ENCODE measurements at regions of chr12 and their contacts with region 1.

Region 1: GRCh38 chr12:1795785-1796514 is 24.4 kb upstream of the LRTM2 start:
- DNase-seq: peak; percentile 89
- H3K4me3 ChIP-seq: peak overlapping the region; percentile 32 to 62 (median 35)
- H3K27ac ChIP-seq: no peak overlapping the region
- H3K4me1 ChIP-seq: peaks cover 12% of the 10 kb centered on the region
- H3K27me3 ChIP-seq: no peaks in the 10 kb centered on the region
- CTCF ChIP-seq: peak; percentile 88 to 99
- POLR2A ChIP-seq: peak; percentile 67

Region 2: GRCh38 chr12:1650260-1650977 is 145.5 kb before region 1 on chr12:
- CTCF ChIA-PET with region 1: interaction called, 840 read pairs
- POLR2A ChIA-PET with region 1: interaction called, 7 read pairs
- dilution Hi-C with region 1: no loop called
- intact Hi-C with region 1: loop called (anchors 1 kb)
- DNase-seq: no peak
- H3K4me3 ChIP-seq: no peak overlapping the region
- H3K27ac ChIP-seq: no peak overlapping the region
- H3K4me1 ChIP-seq: no peaks in the 10 kb centered on the region
- H3K27me3 ChIP-seq: peaks cover 24 to 27% of the 10 kb centered on the region in 2 experiments
- CTCF ChIP-seq: no peak
- POLR2A ChIP-seq: no peak

Region 3: DNA sequence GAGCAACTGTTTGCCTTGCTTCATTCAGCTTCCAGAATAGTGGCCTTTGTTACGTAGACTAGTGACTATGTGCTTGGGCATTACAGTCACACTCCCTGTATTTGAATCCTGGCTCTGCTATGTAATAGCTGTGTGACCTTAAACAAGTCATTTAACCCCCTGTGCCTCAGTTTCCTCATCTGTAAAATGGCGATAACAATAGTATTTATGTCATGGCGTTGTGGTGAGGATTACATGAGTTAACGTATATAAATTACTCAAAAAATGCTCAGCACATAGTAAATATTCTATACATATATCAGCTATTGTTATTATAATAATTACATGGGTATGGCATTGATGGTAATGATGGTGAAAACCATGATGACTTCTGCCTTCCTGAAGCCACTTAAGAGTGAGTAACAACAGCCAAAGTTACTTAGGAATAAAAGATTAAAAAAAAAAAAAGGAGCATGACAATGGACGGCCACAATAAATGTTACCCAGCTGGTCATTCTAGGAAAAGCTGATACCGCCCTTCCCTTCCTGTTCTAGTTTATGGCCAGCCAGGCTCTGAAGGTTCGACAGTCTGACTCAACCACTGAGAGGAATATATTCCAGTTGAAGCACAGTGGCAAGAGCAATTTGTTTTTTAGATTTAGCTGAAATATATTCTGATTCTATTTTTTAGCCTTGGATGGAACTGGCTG is 115.0 kb before region 1 on chr12:
- CTCF ChIA-PET with region 1: interaction called, 21 read pairs
- POLR2A ChIA-PET with region 1: no interaction called
- dilution Hi-C with region 1: no loop called
- intact Hi-C with region 1: no loop called
- DNase-seq: peak; percentile 95
- H3K4me3 ChIP-seq: no peak overlapping the region
- H3K27ac ChIP-seq: peak overlapping the region; percentile 76
- H3K4me1 ChIP-seq: peaks cover 15% of the 10 kb centered on the region
- H3K27me3 ChIP-seq: peaks cover 0 to 2% of the 10 kb centered on the region in 2 experiments
- CTCF ChIP-seq: no peak
- POLR2A ChIP-seq: no peak

Region 4: GRCh38 chr12:1768615-1769014 is 27.3 kb before region 1 on chr12:
- CTCF ChIA-PET with region 1: interaction called, 11 read pairs
- POLR2A ChIA-PET with region 1: no interaction called
- dilution Hi-C with region 1: no loop called
- intact Hi-C with region 1: no loop called
- DNase-seq: no peak
- H3K4me3 ChIP-seq: no peak overlapping the region
- H3K27ac ChIP-seq: no peak overlapping the region
- H3K4me1 ChIP-seq: no peaks in the 10 kb centered on the region
- H3K27me3 ChIP-seq: no peaks in the 10 kb centered on the region
- CTCF ChIP-seq: no peak
- POLR2A ChIP-seq: no peak

Region 5: DNA sequence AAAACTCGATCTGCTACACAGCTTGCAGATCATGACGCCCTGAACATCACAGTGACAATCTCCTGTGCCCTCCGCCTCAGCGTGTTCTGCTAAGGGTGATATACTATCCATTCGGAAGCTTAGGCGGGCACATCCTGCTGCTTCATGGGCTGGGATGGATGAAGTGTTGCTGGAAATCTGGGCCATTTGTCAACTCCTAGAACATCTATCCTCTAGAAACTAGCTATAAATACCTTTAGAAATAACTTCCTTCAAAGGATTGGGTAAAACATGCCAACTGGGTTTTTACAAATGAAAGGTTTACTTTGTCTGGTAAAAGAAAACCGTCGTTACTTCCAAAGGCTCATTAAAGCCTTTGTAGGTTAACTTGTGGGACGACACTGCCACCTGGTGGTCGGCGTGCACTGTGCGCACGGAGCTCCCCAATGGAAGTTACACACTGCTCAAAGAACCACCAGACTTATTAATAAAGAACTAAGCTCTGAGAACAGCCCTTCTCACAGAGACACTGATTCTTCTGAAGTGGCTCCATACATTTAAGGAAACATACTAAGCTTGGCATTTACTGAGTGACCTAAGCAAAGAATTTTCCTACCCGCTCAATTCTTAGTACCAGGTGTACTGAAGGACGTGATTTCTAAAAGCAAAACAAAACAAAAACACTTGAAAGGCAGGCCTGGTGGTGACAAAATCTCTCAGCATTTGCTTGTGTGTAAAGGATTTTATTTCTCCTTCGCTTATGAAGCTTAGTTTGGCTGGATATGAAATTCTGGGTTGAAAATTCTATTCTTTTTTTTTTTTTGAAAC is 144.1 kb after region 1 on chr12:
- CTCF ChIA-PET with region 1: interaction called, 226 read pairs
- POLR2A ChIA-PET with region 1: no interaction called
- dilution Hi-C with region 1: no loop called
- intact Hi-C with region 1: loop called (anchors 1 kb)
- DNase-seq: peak; percentile 85
- H3K4me3 ChIP-seq: no peak overlapping the region
- H3K27ac ChIP-seq: no peak overlapping the region
- H3K4me1 ChIP-seq: no peaks in the 10 kb centered on the region
- H3K27me3 ChIP-seq: no peaks in the 10 kb centered on the region
- CTCF ChIP-seq: peak; percentile 91 to 98
- POLR2A ChIP-seq: no peak

Region 6: GRCh38 chr12:2118061-2118460 is 322.1 kb after region 1 on chr12:
- CTCF ChIA-PET with region 1: no interaction called
- POLR2A ChIA-PET with region 1: no interaction called
- dilution Hi-C with region 1: no loop called
- intact Hi-C with region 1: no loop called
- DNase-seq: no peak
- H3K4me3 ChIP-seq: no peak overlapping the region
- H3K27ac ChIP-seq: no peak overlapping the region
- H3K4me1 ChIP-seq: no peaks in the 10 kb centered on the region
- H3K27me3 ChIP-seq: no peaks in the 10 kb centered on the region
- CTCF ChIP-seq: no peak
- POLR2A ChIP-seq: no peak

Region 7: GRCh38 chr12:2583091-2583497 is 787.1 kb after region 1 on chr12:
- CTCF ChIA-PET with region 1: interaction called, 14 read pairs
- POLR2A ChIA-PET with region 1: no interaction called
- dilution Hi-C with region 1: no loop called
- intact Hi-C with region 1: loop called (anchors 1 kb)
- DNase-seq: peak; percentile 20
- H3K4me3 ChIP-seq: no peak overlapping the region
- H3K27ac ChIP-seq: no peak overlapping the region
- H3K4me1 ChIP-seq: no peaks in the 10 kb centered on the region
- H3K27me3 ChIP-seq: peaks cover 6% of the 10 kb centered on the region in 2 experiments
- CTCF ChIP-seq: peak; percentile 78 to 85
- POLR2A ChIP-seq: no peak